ENCODE measurements at regions of chr11 and their contacts with region 1.

Region 1: GRCh38 chr11:6619004-6619745 is at the start of gene TPP1:
- DNase-seq: peak; percentile 76 to 94 (median 90)
- ATAC-seq: peak; percentile 96
- H3K4me3 ChIP-seq: peak within 1 kb of the TSS; percentile 91
- H3K4me3 Mint-ChIP-seq: no peak within 1 kb of the TSS
- H3K27ac ChIP-seq: peak within 1 kb of the TSS; percentile 87
- H3K27ac Mint-ChIP-seq: no peak within 1 kb of the TSS
- H3K4me1 ChIP-seq: peaks cover 6 to 22% of the 10 kb centered on the region in 2 donors
- H3K4me1 Mint-ChIP-seq: peaks cover 7 to 17% (median 9%) of the 10 kb centered on the region in 7 donors
- H3K27me3 ChIP-seq: no peaks in the 10 kb centered on the region
- H3K27me3 Mint-ChIP-seq: no peaks in the 10 kb centered on the region
- total RNA-seq, gene TPP1: 49.9 to 160 (median 134) TPM

Region 2: GRCh38 chr11:6402561-6402981 is 216.6 kb before region 1 on chr11:
- CTCF ChIA-PET with region 1: no interaction called
- POLR2A ChIA-PET with region 1: no interaction called
- intact Hi-C with region 1: loop called in 1 of 2 experiments (anchors 5 kb)
- DNase-seq: peak in 8 of 9 donors; percentile 69 to 99 (median 97)
- ATAC-seq: peak; percentile 92
- H3K4me3 ChIP-seq: peak overlapping the region; percentile 52
- H3K4me3 Mint-ChIP-seq: peak overlapping the region; percentile 74 to 94 (median 90)
- H3K27ac ChIP-seq: peak overlapping the region; percentile 80
- H3K27ac Mint-ChIP-seq: peak overlapping the region; percentile 94 to 100 (median 97)
- H3K4me1 ChIP-seq: peaks cover 53 to 83% of the 10 kb centered on the region in 2 donors
- H3K4me1 Mint-ChIP-seq: peaks cover 63 to 100% (median 87%) of the 10 kb centered on the region in 7 donors
- H3K27me3 ChIP-seq: no peaks in the 10 kb centered on the region
- H3K27me3 Mint-ChIP-seq: peaks cover 0 to 5% (median 0%) of the 10 kb centered on the region in 5 donors

Region 3: GRCh38 chr11:6468712-6469495 is 150.3 kb before region 1 on chr11:
- CTCF ChIA-PET with region 1: no interaction called
- POLR2A ChIA-PET with region 1: no interaction called
- intact Hi-C with region 1: no loop called
- DNase-seq: no peak
- ATAC-seq: peak; percentile 69
- H3K4me3 ChIP-seq: no peak overlapping the region
- H3K4me3 Mint-ChIP-seq: no peak overlapping the region
- H3K27ac ChIP-seq: no peak overlapping the region
- H3K27ac Mint-ChIP-seq: no peak overlapping the region
- H3K4me1 ChIP-seq: peaks cover 7 to 11% of the 10 kb centered on the region in 2 donors
- H3K4me1 Mint-ChIP-seq: peaks cover 12 to 22% (median 14%) of the 10 kb centered on the region in 7 donors
- H3K27me3 ChIP-seq: no peaks in the 10 kb centered on the region
- H3K27me3 Mint-ChIP-seq: peaks cover 0 to 24% (median 0%) of the 10 kb centered on the region in 5 donors

Region 4: DNA sequence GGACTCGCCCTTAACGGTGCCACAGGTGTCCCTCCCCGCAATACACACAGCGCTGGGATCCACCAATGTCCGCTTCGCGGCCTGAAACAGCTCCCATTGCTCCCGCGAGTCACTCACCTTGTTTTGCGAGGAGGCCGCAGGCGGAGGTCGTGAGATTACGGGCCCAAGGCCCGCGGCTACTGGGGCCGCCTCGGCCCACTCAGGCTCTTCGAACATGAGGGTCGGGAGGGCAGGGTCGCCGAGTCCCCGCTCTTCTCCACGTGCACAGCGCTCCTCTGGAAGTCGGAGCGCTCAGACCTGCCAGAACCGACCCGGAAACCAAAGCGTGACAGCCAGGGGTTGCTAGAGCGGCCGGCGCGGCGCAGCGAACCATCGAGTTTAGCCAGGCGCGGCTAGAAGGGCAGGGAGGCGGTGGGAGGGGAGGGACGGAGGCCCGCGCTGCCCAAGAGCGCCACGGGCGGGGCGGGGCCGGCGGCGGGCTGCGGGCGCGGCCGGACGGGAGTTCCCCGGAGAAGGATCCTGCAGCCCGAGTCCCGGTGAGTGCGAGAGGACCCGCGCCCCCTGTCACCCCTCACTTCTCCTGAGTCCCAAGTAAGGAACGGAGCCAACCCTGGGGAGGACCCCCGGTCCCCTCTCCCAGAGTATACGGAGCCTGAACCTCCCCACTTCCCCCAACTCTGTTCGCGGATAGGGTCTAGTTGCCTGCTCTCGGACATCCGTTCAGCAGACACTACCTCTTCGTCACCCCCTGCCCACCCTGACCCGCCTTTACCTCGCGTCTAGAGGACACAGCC is 15.7 kb before region 1 on chr11 and contains the starts of genes ILK and RRP8:
- CTCF ChIA-PET with region 1: interaction called, 25 read pairs
- POLR2A ChIA-PET with region 1: interaction called, 70 read pairs
- intact Hi-C with region 1: loop called (anchors 1 kb)
- DNase-seq: peak; percentile 69 to 86 (median 78)
- ATAC-seq: peak; percentile 92
- H3K4me3 ChIP-seq: peak within 1 kb of the TSS; percentile 85
- H3K4me3 Mint-ChIP-seq: no peak within 1 kb of the TSS
- H3K27ac ChIP-seq: peak within 1 kb of the TSS; percentile 86
- H3K27ac Mint-ChIP-seq: no peak within 1 kb of the TSS
- H3K4me1 ChIP-seq: peaks cover 51% of the 10 kb centered on the region in 2 donors
- H3K4me1 Mint-ChIP-seq: peaks cover 9 to 33% (median 21%) of the 10 kb centered on the region in 7 donors
- H3K27me3 ChIP-seq: no peaks in the 10 kb centered on the region
- H3K27me3 Mint-ChIP-seq: no peaks in the 10 kb centered on the region
- total RNA-seq, gene ILK: 34.4 to 165 (median 89.6) TPM
- total RNA-seq, gene RRP8: 21.4 to 37.9 (median 27.9) TPM

Region 5: DNA sequence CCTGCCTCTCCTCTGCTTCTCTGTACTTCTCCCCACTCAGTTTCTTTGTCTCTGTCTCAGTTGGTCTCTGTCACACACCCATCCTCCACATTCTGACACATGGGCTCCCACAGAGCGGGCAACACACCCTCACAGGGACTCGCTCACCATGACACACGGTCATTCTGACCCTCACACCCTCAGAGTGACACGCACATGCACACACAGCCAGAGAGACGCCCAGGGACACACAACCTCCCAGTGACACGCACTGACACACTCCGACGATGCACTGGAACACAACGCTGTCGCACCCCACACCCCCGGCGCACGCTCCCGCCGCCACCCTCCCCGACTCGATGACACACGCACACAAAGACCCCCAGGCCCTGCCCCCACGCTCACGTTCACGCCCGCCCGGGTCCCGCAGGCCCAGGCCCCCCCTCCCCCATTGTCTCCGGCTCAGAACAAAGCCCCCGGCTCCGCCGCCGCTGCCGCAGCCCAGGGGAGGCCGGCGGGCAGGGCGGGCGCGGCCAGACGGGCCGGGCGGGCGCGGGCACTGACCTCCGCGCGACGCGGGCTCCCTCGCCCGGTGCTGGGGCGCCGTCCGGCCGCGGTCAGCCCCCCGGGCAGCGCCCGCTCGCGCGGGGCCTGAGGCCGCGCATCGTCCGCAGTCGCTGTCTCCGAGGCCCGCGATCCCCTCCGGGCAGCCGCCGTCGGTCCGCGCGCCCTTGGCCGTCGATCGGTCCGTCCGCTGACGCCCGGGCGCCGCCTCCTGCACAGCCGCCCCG is 36.0 kb after region 1 on chr11:
- CTCF ChIA-PET with region 1: interaction called, 4 read pairs
- POLR2A ChIA-PET with region 1: interaction called, 57 read pairs
- intact Hi-C with region 1: loop called (anchors 1 to 5 kb)
- DNase-seq: peak in 7 of 9 donors; percentile 15 to 50 (median 34)
- ATAC-seq: peak; percentile 60
- H3K4me3 ChIP-seq: peak overlapping the region; percentile 52
- H3K4me3 Mint-ChIP-seq: no peak overlapping the region
- H3K27ac ChIP-seq: peak overlapping the region; percentile 66
- H3K27ac Mint-ChIP-seq: no peak overlapping the region
- H3K4me1 ChIP-seq: peaks cover 0 to 26% of the 10 kb centered on the region in 2 donors
- H3K4me1 Mint-ChIP-seq: peaks cover 5 to 11% (median 7%) of the 10 kb centered on the region in 7 donors
- H3K27me3 ChIP-seq: no peaks in the 10 kb centered on the region
- H3K27me3 Mint-ChIP-seq: peaks cover 0 to 16% (median 0%) of the 10 kb centered on the region in 5 donors

Region 6: DNA sequence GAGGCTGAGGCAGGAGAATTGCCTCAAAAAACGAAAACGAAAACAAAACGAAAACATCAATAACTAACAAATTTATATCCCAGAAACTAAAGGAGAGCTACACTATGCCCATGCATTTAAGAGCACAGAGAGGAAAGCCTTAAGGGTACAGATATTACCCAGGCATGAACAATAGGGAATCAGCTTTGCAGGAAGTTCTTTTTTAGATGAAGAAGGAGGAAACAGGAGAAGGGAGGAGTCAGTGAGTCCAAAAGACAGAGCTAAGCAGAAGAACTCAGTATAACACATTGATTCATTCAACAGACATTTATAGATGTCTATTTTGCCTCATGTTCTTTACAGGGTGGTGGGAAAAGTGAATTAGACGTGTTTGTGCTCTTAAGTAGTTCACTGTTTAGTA is 55.7 kb after region 1 on chr11:
- CTCF ChIA-PET with region 1: interaction called, 5 read pairs
- POLR2A ChIA-PET with region 1: interaction called, 35 read pairs
- intact Hi-C with region 1: no loop called
- DNase-seq: no peak
- ATAC-seq: no peak
- H3K4me3 ChIP-seq: no peak overlapping the region
- H3K4me3 Mint-ChIP-seq: peak overlapping the region in 4 of 10 donors; percentile 18 to 85 (median 42)
- H3K27ac ChIP-seq: no peak overlapping the region
- H3K27ac Mint-ChIP-seq: peak overlapping the region in 1 of 9 donors; percentile 9
- H3K4me1 ChIP-seq: peaks cover 16 to 50% of the 10 kb centered on the region in 2 donors
- H3K4me1 Mint-ChIP-seq: peaks cover 44 to 77% (median 65%) of the 10 kb centered on the region in 7 donors
- H3K27me3 ChIP-seq: no peaks in the 10 kb centered on the region
- H3K27me3 Mint-ChIP-seq: no peaks in the 10 kb centered on the region

Region 7: GRCh38 chr11:6746086-6746618 is 127.0 kb after region 1 on chr11:
- CTCF ChIA-PET with region 1: no interaction called
- POLR2A ChIA-PET with region 1: interaction called, 5 read pairs
- intact Hi-C with region 1: loop called in 1 of 2 experiments (anchors 1 kb)
- DNase-seq: peak in 8 of 9 donors; percentile 32 to 66 (median 64)
- ATAC-seq: peak; percentile 89
- H3K4me3 ChIP-seq: peak overlapping the region; percentile 80
- H3K4me3 Mint-ChIP-seq: no peak overlapping the region
- H3K27ac ChIP-seq: peak overlapping the region; percentile 85
- H3K27ac Mint-ChIP-seq: no peak overlapping the region
- H3K4me1 ChIP-seq: peaks cover 18 to 37% of the 10 kb centered on the region in 2 donors
- H3K4me1 Mint-ChIP-seq: peaks cover 26 to 48% (median 29%) of the 10 kb centered on the region in 7 donors
- H3K27me3 ChIP-seq: no peaks in the 10 kb centered on the region
- H3K27me3 Mint-ChIP-seq: no peaks in the 10 kb centered on the region

Measured in naive thymus-derived CD4-positive, alpha-beta T cell (primary cell).